Left colon (tissue), 2 donors: ENCODE measurements at regions of chr9 and their contacts with region 1.

Region 1: GRCh38 chr9:112793213-112793810 is 42.8 kb downstream of the SNX30 start:
- DNase-seq: peak; percentile 71 to 84
- ATAC-seq: peak; percentile 97

Region 2: DNA sequence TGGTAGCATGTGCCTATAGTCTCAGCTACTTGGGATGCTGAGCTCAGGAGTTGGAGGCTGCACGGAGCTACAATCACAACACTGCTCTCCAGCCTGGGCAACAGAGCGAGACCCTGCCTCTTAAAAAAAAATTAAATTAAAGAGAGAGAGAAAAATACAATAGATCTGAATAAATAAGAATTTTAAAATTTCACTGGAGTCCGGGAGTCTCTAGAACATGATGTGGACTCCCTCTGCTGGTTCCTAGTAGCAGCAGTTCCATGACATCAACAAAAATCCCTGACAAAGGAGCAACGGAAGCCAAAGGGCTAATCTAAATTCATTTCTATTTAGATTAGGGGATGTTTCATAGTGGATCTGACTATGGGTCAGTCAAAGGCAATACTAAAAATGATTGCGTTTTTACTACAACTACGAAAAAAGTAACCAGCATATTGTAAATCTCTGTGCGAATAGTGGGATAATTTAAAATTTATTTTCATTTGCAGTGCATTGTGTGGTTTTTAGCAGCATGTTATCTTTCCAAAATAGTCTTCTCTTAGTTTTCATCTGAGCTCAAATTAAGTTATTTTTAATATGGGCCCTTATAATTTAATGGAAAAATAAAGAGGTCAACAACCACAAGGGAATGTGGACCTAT is 82.1 kb before region 1 on chr9:
- intact Hi-C with region 1: loop called in 1 of 2 experiments (anchors 5 kb)
- DNase-seq: no peak
- ATAC-seq: peak; percentile 45